ENCODE measurements at regions of chr19 and their contacts with region 1.

Region 1: DNA sequence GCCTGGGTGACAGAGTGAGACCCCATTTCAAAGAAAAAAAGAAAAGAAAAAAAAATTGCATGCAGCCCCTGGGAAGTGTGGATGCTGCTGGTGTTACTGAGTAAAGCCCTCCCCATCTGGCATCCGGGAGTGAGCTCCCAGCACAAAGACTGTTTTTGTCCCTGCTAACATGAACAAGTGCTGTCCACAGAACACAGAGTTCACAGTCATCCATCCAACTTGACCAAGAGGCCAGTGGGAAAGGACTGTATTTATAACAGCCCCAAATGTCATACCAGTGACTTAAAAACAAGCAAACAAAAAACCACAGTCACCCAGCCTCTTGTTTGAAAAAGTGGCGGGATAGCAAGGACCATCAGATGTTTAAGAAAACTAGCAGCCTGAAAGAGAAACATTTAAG is 10.8 kb downstream of the FBXO17 start:
- DNase-seq: no peak
- ATAC-seq: no peak
- H3K4me3 Mint-ChIP-seq: no peak overlapping the region
- H3K27ac Mint-ChIP-seq: no peak overlapping the region
- H3K4me1 Mint-ChIP-seq: peaks cover 4% of the 10 kb centered on the region
- H3K27me3 Mint-ChIP-seq: peaks cover 10% of the 10 kb centered on the region

Region 2: DNA sequence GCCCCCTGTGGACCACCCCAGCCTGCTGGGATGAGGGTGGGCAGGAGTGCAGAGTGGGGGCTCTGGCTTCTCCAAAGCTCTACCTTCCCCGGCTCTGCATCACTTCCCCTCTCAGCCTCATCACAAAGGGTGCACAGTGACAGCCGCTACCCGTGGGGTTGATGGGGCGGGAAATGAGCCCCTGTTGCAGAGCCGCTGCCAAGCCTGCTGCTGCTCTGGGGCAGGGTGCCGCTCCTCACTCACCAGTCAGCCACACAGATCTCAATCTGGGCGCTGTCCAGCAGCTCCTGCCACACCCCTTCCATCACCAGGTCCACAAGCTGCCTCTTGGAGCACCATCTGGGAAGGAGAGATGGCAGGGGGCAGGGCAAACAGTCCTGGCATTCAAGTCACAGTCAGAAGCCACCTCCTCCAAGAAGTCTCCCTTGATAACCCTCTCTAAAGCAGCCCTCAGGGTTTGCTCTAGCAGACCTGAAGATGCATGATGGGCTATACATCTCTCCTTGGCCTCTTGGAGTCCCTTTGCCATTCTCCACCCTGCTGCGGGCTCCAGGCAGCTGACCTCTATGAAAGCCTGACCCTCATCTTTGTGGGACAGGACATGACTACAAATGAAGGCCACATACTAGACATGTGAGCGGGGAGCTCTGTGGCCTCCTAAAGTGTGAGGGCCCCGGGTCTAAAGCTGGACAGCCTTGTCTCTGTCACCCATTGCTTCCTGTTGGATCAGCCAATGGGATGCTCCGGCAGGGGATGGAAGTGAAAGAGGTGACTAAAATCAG is 18.3 kb before region 1 on chr19:
- CTCF ChIA-PET with region 1: no interaction called
- POLR2A ChIA-PET with region 1: no interaction called
- intact Hi-C with region 1: no loop called
- DNase-seq: peak; percentile 20
- ATAC-seq: no peak
- H3K4me3 Mint-ChIP-seq: no peak overlapping the region
- H3K27ac Mint-ChIP-seq: no peak overlapping the region
- H3K4me1 Mint-ChIP-seq: peaks cover 14% of the 10 kb centered on the region
- H3K27me3 Mint-ChIP-seq: peaks cover 2% of the 10 kb centered on the region

Region 3: GRCh38 chr19:38975214-38975860 is 10.6 kb after region 1 on chr19 and contains the start of gene FBXO17:
- CTCF ChIA-PET with region 1: interaction called, 10 read pairs
- POLR2A ChIA-PET with region 1: no interaction called
- intact Hi-C with region 1: no loop called
- DNase-seq: no peak
- ATAC-seq: no peak
- H3K4me3 Mint-ChIP-seq: peak within 1 kb of the TSS; percentile 40
- H3K27ac Mint-ChIP-seq: no peak within 1 kb of the TSS
- H3K4me1 Mint-ChIP-seq: peaks cover 27% of the 10 kb centered on the region
- H3K27me3 Mint-ChIP-seq: peaks cover 29% of the 10 kb centered on the region
- total RNA-seq, gene FBXO17: not detected

Region 4: DNA sequence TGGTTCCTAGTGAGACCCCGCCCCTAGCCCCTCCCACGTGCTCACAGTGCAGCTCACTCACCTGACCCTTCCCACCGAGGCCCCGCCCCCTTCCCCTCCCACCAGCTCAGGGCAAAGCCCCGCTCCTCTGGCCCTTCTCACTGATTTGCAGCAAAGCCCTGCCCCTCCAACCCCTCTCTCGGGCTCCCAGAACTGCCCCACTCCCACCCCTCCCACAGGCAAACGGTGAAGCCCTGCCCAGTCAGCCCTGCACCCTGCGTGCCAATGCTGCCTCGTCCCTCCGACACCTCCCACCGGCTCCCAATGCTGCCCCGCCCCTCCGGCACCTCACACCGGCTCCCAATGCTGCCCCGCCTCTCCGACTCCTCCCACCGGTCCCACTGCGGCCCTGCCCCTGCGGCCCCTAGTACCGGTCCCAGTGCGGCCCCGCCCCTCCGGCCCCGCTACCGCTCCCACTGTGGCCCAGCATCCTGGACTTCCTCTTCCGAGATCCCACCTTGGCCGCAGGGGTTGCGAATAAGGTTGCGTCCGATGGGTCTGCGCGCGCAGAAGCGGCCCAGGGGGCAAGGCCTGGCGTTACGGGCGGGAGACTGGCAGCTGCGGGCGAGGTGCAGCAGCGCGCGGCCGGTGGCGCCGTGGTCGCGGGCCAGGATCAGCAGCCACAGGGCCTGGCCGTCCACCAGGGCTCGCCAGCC is 66.8 kb after region 1 on chr19:
- CTCF ChIA-PET with region 1: no interaction called
- POLR2A ChIA-PET with region 1: no interaction called
- intact Hi-C with region 1: loop called (anchors 5 to 10 kb)
- DNase-seq: peak; percentile 91
- ATAC-seq: peak; percentile 97
- H3K4me3 Mint-ChIP-seq: peak overlapping the region; percentile 58
- H3K27ac Mint-ChIP-seq: no peak overlapping the region
- H3K4me1 Mint-ChIP-seq: peaks cover 5% of the 10 kb centered on the region
- H3K27me3 Mint-ChIP-seq: peaks cover 24% of the 10 kb centered on the region

Region 5: DNA sequence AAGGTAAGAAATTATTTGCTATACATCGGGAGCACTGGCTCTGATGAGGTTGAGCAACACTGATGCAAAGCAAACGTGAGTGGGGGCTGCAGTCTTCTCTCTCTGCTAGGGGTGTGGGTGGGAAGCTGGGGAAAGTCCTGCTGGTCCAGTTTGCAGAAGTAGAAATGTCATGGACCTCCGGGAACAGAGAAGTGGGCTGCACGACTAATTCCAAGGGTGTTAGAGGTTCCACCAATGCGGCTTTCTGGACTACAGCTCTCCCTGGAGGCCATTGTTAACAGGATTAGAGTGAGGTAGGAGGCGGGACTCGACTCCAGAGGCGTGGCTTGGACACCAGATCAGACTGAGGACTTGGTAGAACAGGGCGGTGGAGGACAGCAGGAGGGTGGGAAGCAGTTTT is 73.4 kb after region 1 on chr19:
- CTCF ChIA-PET with region 1: interaction called, 4 read pairs
- POLR2A ChIA-PET with region 1: no interaction called
- intact Hi-C with region 1: loop called (anchors 5 to 10 kb)
- DNase-seq: peak; percentile 41
- ATAC-seq: peak; percentile 61
- H3K4me3 Mint-ChIP-seq: no peak overlapping the region
- H3K27ac Mint-ChIP-seq: no peak overlapping the region
- H3K4me1 Mint-ChIP-seq: no peaks in the 10 kb centered on the region
- H3K27me3 Mint-ChIP-seq: peaks cover 6% of the 10 kb centered on the region

Region 6: GRCh38 chr19:39199025-39199424 is 234.3 kb after region 1 on chr19:
- CTCF ChIA-PET with region 1: no interaction called
- POLR2A ChIA-PET with region 1: no interaction called
- intact Hi-C with region 1: loop called in 1 of 2 experiments (anchors 5 kb)
- DNase-seq: no peak
- ATAC-seq: no peak
- H3K4me3 Mint-ChIP-seq: no peak overlapping the region
- H3K27ac Mint-ChIP-seq: no peak overlapping the region
- H3K4me1 Mint-ChIP-seq: peaks cover 17% of the 10 kb centered on the region
- H3K27me3 Mint-ChIP-seq: peaks cover 62% of the 10 kb centered on the region

Measured in activated CD4-positive, alpha-beta T cell treated with anti-CD3 and anti-CD28 coated beads for 36 hours (primary cell).